ENCODE measurements at regions of chr15 and their contacts with region 1.

Region 1: DNA sequence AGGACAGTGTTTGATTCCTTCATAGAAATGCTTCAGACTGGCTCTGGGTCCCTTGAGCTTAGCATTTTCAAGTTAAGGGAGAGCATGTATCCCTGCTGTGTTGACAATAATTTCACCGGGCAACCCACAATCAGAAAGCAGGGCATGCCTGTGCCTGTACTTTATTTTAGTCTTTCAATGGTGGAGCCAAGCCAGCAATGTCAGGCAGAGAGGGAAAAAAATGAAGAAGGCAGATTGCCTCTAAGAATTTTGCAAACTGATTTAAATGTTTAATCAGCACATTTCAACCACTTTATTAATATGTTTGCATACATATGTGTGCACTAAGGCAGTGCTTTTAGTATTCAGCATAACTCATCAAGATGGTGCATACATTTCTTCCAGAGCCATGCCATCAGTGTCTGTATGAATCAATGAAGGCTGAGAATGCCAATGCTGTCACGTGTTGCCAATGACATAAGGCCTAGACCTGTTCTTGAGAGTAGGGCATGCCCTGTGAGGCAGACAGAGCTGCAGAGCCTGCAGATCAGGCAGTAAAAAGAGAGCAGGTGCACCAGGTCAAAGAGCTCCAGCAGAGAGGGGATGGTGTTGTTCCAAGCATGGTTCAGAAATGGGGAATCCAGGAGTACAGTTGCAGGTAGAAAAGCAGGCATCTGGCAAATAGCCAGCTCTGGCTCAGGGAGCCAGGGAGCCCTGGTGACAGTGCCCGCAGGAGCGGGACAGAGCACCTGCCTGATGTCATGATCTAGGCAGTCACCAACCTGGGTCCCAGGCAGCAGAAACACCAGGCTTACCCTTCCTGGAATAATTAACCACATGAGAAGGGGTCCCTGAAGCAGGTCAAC is 508.5 kb downstream of the GABRG3 start:
- DNase-seq: no peak
- ATAC-seq: no peak

Region 2: DNA sequence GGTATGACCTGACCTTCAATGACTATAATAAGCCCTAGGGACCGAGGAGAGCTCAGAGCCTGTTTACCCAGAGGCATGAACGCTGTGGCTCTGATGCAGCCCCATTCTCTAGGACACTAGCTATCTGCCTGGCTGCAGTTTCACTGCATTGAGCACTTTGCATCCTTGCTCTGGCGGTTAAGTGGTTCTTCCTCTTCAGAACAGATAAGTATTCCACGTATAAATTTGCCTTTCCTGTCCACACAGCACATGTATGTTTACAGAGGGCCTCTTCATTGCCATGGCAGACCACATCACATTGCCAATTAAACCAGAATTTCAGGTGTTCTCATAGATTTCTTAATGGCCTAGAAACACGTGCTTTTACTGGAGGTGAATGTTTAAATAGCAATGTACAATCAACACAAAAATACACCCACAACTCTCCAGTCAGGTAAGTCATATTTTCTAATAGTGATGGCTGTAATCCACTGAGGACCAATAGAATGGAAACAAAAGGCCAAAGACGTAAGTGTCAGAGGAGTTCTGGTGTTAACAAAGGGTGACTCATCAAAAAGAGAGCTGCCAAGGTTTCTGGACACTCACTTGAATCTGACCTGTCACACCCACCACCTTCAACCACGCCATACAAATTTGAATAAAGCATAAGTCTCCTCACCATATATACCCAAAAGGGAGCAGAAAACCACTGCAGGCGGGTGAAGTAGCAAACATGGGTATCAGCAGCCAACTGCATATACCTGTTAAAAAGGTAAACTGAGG is 66.2 kb after region 1 on chr15:
- intact Hi-C with region 1: loop called in 1 of 2 experiments (anchors 10 kb)
- DNase-seq: no peak
- ATAC-seq: no peak